MCF 10A (cell line): ENCODE measurements at regions of chr14 and their contacts with region 1.

Region 1: GRCh38 chr14:54566410-54567223 is at the start of gene SAMD4A:
- DNase-seq: peak; percentile 86
- H3K4me3 Mint-ChIP-seq: peak within 1 kb of the TSS; percentile 87
- H3K27ac Mint-ChIP-seq: peak within 1 kb of the TSS; percentile 83
- H3K4me1 Mint-ChIP-seq: peaks cover 14% of the 10 kb centered on the region
- H3K27me3 Mint-ChIP-seq: no peaks in the 10 kb centered on the region
- CTCF ChIP-seq: peak; percentile 35
- total RNA-seq, gene SAMD4A: 60.6 and 63.5 TPM in 2 replicates

Region 2: DNA sequence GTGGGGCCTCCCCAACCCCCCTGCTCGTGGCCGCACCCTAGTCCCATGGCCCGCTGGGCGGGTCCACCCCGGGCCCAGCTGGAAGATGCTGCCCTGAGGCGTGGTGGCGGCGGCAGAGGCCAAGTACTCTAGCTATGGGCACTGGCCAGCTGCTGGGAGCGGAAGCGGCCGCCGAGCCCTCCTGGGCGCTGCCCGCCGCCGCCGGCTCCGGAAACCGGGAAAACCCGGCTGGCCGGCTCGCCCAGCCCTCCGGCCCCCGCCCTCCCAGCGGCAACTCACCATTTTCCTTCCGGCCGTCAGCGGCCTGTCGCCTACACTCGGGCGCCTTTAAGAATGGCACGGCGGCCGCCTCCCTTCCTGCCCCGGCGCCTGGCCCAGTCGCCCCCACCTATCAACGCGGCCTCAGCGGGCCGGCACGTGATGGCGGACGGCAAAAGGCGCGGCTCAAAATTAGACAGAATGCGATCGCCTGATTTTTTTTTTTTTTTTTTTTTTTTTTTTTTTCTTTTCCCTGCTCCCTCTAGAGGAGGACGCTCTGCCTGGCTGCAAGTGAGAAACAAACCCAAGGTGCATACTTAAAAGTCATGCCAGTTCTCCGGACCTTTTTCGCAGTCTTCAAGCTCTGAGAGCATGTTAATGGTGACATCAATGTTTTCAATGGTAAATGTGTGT is 77.8 kb before region 1 on chr14 and contains the start of gene GMFB:
- CTCF ChIA-PET with region 1: interaction called, 6 read pairs
- POLR2A ChIA-PET with region 1: interaction called, 14 read pairs
- intact Hi-C with region 1: no loop called
- DNase-seq: peak; percentile 93
- H3K4me3 Mint-ChIP-seq: peak within 1 kb of the TSS; percentile 73
- H3K27ac Mint-ChIP-seq: peak within 1 kb of the TSS; percentile 78
- H3K4me1 Mint-ChIP-seq: peaks cover 30% of the 10 kb centered on the region
- H3K27me3 Mint-ChIP-seq: no peaks in the 10 kb centered on the region
- CTCF ChIP-seq: peak; percentile 22
- total RNA-seq, gene GMFB: 53.3 and 65.0 TPM in 2 replicates

Region 3: DNA sequence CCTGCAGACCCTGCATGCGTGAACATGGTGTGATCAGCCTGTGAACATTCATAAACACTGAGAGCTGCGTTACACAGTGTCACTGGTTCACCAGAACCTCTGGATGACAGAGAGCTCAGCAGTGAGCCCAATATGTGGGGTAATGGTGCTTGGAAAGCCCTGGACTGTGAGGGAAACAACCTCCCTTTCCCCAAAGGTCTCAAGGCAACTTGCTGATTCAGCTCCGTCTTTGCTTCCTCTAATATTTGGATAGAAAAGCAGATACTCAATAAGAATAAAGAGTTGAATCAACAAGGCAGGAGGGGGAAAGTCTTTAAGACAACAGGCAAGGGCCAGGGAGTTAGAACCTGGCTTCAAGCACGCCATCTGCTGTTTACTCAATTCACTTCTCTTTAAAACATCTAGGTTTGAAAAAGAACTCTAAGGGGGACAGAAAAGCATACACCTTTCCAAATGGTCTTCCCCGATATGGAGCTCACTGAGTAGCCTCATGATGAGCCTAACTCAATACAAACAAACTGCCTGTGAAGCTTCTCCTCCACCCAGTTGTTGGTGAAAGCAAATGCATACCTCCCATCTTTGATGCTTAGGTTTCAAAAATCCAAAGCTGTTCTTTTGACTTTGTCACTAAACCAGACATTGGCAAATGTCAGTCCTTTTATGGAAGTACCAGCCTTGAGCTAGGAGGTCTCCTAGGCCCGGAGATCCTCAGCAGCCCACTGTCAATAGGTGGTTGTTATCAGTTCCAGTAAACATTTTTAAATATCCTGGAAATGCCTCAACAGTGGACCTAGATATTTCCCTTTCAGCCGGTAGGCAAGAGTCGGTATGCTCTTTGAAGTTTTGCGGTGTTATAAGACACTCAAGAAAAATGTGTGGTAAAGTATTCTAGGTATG is 76.4 kb after region 1 on chr14:
- CTCF ChIA-PET with region 1: interaction called, 19 read pairs
- POLR2A ChIA-PET with region 1: interaction called, 10 read pairs
- intact Hi-C with region 1: no loop called
- DNase-seq: peak; percentile 24
- H3K4me3 Mint-ChIP-seq: no peak overlapping the region
- H3K27ac Mint-ChIP-seq: no peak overlapping the region
- H3K4me1 Mint-ChIP-seq: peaks cover 12% of the 10 kb centered on the region
- H3K27me3 Mint-ChIP-seq: no peaks in the 10 kb centered on the region
- CTCF ChIP-seq: no peak

Region 4: DNA sequence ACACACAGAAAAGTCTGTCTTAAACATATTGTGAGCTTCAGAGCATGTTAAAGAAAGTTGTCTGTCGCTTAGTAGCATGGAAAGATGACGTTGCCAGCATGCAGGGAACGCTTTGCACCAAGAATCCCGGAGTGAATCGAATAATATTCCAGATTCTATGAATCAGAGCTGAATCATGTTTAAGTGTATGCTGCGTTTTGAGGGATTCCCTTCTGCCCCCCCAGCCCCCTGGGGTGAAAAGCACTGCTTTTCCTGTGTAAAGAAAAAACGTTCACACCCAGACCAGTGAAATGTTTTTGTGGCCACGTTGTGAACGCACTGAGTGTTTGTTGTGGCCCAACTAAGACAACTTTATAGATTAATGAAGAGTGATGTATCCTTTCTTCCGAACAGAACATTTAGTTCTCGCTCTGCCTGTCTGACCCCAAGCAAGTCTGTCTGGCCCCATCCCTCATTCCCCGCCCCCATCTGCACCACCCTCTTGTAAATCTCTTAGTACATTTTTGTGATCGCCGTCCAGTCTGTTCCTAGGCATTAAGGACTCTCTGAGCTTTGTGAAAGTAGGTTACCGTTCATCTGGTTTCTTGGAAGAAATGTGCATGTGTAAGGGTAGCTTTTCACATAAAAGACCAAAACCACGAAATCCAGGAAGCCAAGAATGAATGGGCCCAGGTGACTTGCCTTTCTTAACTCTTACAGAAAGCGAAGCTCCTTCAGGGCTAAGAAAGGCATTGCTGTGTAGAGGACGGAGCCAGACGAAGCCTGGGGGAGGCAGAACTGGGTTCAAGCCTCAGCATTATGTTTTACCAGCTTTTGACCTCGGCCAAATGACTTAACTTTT is 103.3 kb after region 1 on chr14:
- CTCF ChIA-PET with region 1: interaction called, 9 read pairs
- POLR2A ChIA-PET with region 1: interaction called, 13 read pairs
- intact Hi-C with region 1: no loop called
- DNase-seq: peak; percentile 74
- H3K4me3 Mint-ChIP-seq: peak overlapping the region; percentile 69
- H3K27ac Mint-ChIP-seq: peak overlapping the region; percentile 96
- H3K4me1 Mint-ChIP-seq: peaks cover 53% of the 10 kb centered on the region
- H3K27me3 Mint-ChIP-seq: no peaks in the 10 kb centered on the region
- CTCF ChIP-seq: no peak

Region 5: GRCh38 chr14:54683882-54684794 is 117.5 kb after region 1 on chr14:
- CTCF ChIA-PET with region 1: interaction called, 97 read pairs
- POLR2A ChIA-PET with region 1: interaction called, 95 read pairs
- intact Hi-C with region 1: no loop called
- DNase-seq: peak; percentile 78
- H3K4me3 Mint-ChIP-seq: peak overlapping the region; percentile 36
- H3K27ac Mint-ChIP-seq: peak overlapping the region; percentile 89
- H3K4me1 Mint-ChIP-seq: peaks cover 55% of the 10 kb centered on the region
- H3K27me3 Mint-ChIP-seq: no peaks in the 10 kb centered on the region
- CTCF ChIP-seq: no peak

Region 6: DNA sequence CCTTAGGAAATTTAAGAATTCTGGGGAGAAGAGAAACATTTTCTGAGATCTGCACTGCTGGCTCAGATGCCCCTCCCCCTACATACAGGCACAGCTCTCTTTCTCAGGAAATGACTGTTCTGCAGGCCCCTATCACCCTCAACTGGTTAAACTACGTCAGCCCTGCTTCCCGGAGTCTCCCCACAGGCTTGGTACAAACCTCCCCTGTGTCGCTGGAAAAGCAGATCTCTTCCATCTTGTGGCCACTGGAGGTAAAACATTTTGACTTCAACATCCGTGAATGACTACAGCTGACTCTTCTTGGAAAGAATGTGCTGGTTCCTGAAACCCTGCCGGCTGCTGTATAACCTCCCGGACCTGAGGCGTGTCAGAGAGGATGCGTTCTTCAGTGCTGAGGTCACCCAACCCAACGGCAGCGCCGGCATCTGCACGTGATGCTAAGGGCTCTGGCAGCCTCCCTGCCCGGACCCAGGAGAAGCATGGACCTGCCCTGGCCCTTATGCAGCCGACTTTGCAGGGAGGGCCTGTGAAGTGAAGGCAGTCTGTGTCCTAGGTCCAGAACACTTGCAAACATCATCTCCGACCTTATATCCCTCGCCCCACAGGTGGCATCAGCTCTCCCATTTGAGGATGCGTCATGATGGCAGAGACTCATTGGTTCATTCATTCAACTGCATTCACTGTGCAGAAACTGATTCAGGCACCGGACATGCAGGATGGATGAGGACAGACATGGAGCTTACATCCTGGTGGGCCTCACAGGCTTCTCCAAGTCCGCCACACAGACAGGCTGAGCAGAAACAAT is 206.8 kb after region 1 on chr14:
- CTCF ChIA-PET with region 1: interaction called, 113 read pairs
- POLR2A ChIA-PET with region 1: interaction called, 68 read pairs
- intact Hi-C with region 1: loop called (anchors 1 kb)
- DNase-seq: peak; percentile 98
- H3K4me3 Mint-ChIP-seq: peak overlapping the region; percentile 42
- H3K27ac Mint-ChIP-seq: peak overlapping the region; percentile 93
- H3K4me1 Mint-ChIP-seq: peaks cover 21% of the 10 kb centered on the region
- H3K27me3 Mint-ChIP-seq: no peaks in the 10 kb centered on the region
- CTCF ChIP-seq: peak; percentile 49

Region 7: DNA sequence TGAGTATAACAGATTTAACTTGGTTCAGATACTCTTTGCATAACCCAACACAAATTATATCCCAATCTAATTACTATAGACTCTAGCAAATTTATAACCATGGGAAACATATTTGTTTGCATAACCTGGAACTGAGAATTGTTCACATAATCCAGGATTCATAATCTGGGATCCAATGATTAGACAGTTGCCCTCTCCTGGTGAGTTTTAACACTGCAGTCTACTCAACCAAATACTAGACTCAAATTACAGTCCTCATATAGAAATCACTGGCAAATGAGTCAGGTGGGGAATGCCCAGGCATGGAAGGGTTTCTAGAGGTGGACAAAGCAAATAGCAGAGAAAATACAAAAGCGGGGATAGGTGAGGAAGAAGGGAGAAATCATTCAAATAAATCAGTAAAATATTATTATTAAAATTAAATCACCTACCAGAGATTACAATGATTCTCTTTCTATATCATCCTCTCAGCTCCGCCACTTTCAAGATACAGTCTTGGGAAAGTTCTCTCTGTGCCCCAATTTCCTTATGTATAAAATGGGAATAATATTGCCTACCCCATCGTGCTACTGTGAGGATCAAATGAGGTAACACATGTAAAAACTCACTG is 326.6 kb after region 1 on chr14:
- CTCF ChIA-PET with region 1: interaction called, 4 read pairs
- POLR2A ChIA-PET with region 1: no interaction called
- intact Hi-C with region 1: loop called (anchors 2 kb)
- DNase-seq: peak; percentile 80
- H3K4me3 Mint-ChIP-seq: no peak overlapping the region
- H3K27ac Mint-ChIP-seq: no peak overlapping the region
- H3K4me1 Mint-ChIP-seq: peaks cover 6% of the 10 kb centered on the region
- H3K27me3 Mint-ChIP-seq: no peaks in the 10 kb centered on the region
- CTCF ChIP-seq: peak; percentile 65